Motor neuron (in vitro differentiated cells): ENCODE measurements at regions of chr6 and their contacts with region 1.

Region 1: GRCh38 chr6:166275714-166276166 is 32.5 kb downstream of the PRR18 start:
- ATAC-seq: peak; percentile 80 to 98 (median 84)
- H3K4me3 ChIP-seq: no peak overlapping the region
- H3K27ac ChIP-seq: no peak overlapping the region
- H3K4me1 ChIP-seq: peaks cover 0 to 9% of the 10 kb centered on the region in 2 donors

Region 2: DNA sequence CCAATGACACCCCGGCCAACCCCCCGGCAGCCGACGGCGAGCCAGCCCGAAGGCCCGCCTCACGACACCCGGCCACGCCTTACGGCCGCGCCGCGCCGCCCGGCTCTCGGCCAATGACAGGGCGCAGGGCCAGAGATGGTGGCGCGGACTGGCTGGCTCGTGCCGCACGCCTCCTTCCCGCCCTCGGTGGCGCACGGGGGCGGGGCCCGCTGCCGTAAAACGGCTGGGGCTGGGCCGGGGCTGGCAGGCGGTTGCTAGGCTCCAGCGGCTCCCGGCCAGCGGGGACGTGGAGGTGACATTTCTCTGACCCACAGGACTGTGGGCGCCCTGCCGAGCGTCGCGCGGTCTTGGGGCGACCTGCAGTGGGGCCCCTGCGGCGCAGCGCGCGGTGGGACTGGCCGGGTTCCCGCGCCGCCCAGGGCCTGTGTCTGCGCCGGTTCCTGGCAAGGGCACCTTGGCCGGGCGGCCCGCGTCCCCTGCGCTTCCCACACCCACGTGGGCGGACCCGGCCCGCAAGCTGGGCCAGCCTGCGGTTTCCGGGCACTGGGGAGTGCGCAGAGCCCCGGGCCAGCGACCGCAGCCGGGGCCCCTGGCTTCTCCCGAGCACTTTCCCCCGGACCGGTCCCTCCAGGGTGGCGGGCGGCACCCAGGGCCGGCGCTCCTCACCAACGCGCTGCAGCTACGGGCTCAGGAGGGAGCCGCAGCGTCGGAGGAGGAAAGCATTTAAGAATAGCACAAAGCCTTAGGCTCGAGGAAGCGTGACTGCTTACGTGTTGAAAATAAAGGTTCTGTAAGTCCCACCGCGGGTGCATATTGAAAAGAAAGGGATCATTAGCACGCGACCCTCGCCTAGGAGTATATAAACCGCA is 107.4 kb after region 1 on chr6 and contains the start of gene MPC1:
- in situ Hi-C with region 1: loop called in 2 of 9 experiments (anchors 10 to 25 kb)
- ATAC-seq: peak; percentile 88 to 95 (median 90)
- H3K4me3 ChIP-seq: peak within 1 kb of the TSS; percentile 60 to 94 (median 74)
- H3K27ac ChIP-seq: peak within 1 kb of the TSS; percentile 89 to 96
- H3K4me1 ChIP-seq: peaks cover 0 to 9% of the 10 kb centered on the region in 2 donors
- total RNA-seq, gene MPC1: 39.0 to 91.6 (median 54.1) TPM

Region 3: DNA sequence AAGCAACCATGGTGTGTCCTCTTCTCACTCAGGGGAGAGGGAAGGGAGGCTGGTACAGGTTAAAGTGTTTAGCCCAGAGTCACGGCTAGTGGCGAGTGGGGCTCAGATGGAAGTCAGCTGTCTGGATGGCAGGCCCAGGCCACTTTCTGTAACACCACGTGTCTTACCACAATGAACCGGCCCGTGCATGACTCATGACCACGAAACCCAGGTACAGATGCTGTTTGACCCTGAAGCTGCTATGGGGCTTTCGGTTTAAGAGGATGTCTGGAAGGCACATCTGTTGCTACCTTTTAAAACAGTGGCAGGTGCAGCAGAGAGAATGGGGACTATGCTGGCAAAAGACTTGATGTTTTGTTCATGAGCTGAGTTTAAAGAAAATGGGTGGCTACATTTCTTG is 143.5 kb after region 1 on chr6:
- in situ Hi-C with region 1: loop called in 1 of 9 experiments (anchors 25 kb)
- ATAC-seq: no peak
- H3K4me3 ChIP-seq: no peak overlapping the region
- H3K27ac ChIP-seq: no peak overlapping the region
- H3K4me1 ChIP-seq: no peaks in the 10 kb centered on the region